Esophagus muscularis mucosa (tissue), 4 donors: ENCODE measurements at regions of chr7 and their contacts with region 1.

Region 1: GRCh38 chr7:160958-161725 is 31.2 kb upstream of the FAM20C start:
- DNase-seq: no peak
- H3K4me3 ChIP-seq: no peak overlapping the region
- H3K27ac ChIP-seq: no peak overlapping the region
- H3K4me1 ChIP-seq: peaks cover 0 to 21% (median 5%) of the 10 kb centered on the region in 4 donors
- H3K27me3 ChIP-seq: peaks cover 0 to 3% (median 0%) of the 10 kb centered on the region in 4 donors
- CTCF ChIP-seq: no peak
- EP300 ChIP-seq: no peak
- POLR2A ChIP-seq: no peak

Region 2: GRCh38 chr7:148932-149855 is 11.9 kb before region 1 on chr7:
- intact Hi-C with region 1: loop called (anchors 1 kb)
- DNase-seq: peak; percentile 99
- H3K4me3 ChIP-seq: peak overlapping the region; percentile 51 to 67 (median 64)
- H3K27ac ChIP-seq: peak overlapping the region; percentile 92 to 98 (median 96)
- H3K4me1 ChIP-seq: peaks cover 7 to 26% (median 21%) of the 10 kb centered on the region in 4 donors
- H3K27me3 ChIP-seq: no peaks in the 10 kb centered on the region
- CTCF ChIP-seq: peak in 1 of 3 experiments; percentile 18
- EP300 ChIP-seq: no peak
- POLR2A ChIP-seq: peak; percentile 66

Region 3: DNA sequence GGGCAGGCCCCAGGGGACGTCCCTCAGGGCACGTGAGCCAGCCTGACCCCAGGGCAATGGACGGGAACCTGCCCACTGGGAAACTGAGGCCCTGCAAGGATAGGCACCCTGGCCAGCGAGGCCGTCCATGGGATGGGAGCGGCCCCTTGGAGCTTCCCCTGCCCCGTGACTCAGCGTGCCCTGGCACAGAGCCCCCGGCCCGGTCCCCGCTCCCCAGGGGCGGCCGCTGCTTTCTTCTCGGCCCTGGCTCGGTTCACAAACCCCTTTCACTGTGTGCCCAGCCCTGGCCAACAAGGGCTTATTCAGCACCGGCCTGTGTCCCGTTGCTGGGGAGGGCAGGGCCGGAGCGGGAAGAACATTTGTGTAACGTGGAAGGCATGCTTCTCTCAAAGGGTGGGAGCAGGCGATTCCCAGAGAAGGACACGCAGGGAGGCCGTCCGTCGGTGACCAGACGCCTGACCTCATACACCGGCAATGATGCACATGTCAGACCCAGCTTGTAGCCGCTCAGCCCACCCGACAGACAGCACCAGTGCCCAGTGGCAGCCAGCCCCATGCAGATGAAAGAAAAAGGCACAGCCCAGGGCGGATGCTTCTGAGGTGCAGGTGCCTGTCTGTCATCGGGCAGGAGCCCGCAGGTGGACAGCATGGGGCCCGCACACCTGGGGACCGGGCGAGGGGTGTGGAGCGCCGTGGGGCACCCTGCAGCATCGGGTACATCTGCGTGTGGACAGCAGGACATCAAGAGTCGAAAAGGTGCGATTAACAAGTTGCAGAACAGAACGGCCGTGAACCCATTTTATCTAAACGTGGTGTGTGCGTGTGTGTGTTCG is 264.0 kb after region 1 on chr7:
- intact Hi-C with region 1: no loop called
- DNase-seq: no peak
- H3K4me3 ChIP-seq: peak overlapping the region in 3 of 4 donors; percentile 14 to 23 (median 22)
- H3K27ac ChIP-seq: peak overlapping the region in 3 of 4 donors; percentile 48 to 73 (median 61)
- H3K4me1 ChIP-seq: peaks cover 6 to 22% (median 16%) of the 10 kb centered on the region in 4 donors
- H3K27me3 ChIP-seq: peaks cover 0 to 36% (median 0%) of the 10 kb centered on the region in 4 donors
- CTCF ChIP-seq: no peak
- EP300 ChIP-seq: no peak
- POLR2A ChIP-seq: no peak